ENCODE measurements at regions of chr10 and their contacts with region 1.

Region 1: GRCh38 chr10:21285742-21286331 is 239.6 kb downstream of the SKIDA1 start:
- DNase-seq: no peak
- ATAC-seq: no peak
- H3K4me3 ChIP-seq: no peak overlapping the region
- H3K27ac ChIP-seq: no peak overlapping the region
- H3K4me1 ChIP-seq: no peaks in the 10 kb centered on the region
- H3K27me3 ChIP-seq: no peaks in the 10 kb centered on the region
- CTCF ChIP-seq: no peak
- POLR2A ChIP-seq: no peak

Region 2: DNA sequence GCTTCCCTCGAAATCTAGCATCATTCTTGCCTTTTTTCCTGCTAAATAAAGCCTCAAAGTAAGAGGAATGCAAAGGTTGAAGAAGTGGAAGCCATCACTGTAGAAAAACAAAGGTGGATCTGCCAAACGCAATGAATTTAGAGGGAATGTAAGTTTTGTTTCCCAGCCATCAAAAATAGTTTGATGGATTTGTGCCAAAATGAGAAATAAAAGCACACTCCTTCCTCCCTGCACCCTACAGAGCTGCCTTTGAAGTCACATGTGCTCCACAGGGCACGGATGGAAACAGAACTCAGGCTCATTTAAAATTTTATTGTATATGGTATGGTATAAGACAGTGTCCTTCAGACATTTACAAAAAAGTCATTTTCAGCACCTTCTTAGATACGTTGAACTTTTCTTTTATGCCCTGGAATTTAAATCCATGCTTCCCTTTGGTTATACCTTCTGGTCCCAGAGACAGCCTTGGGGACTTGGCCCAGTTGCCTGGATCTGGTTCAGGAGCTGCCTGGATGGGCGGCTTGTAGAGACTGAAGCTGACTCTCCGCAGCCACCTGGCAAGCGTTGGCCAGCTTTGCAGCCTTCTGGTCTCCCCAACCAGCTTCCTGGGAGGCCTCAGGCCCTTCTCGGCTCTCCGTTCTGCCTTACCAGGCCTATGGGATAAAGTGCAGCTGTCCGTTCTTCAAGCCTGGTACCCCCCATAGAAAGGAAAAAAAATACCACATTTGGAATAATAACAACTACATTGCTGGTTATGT is 160.2 kb before region 1 on chr10:
- intact Hi-C with region 1: no loop called
- DNase-seq: no peak
- ATAC-seq: no peak
- H3K4me3 ChIP-seq: no peak overlapping the region
- H3K27ac ChIP-seq: no peak overlapping the region
- H3K4me1 ChIP-seq: no peaks in the 10 kb centered on the region
- H3K27me3 ChIP-seq: no peaks in the 10 kb centered on the region
- CTCF ChIP-seq: no peak
- POLR2A ChIP-seq: no peak

Region 3: DNA sequence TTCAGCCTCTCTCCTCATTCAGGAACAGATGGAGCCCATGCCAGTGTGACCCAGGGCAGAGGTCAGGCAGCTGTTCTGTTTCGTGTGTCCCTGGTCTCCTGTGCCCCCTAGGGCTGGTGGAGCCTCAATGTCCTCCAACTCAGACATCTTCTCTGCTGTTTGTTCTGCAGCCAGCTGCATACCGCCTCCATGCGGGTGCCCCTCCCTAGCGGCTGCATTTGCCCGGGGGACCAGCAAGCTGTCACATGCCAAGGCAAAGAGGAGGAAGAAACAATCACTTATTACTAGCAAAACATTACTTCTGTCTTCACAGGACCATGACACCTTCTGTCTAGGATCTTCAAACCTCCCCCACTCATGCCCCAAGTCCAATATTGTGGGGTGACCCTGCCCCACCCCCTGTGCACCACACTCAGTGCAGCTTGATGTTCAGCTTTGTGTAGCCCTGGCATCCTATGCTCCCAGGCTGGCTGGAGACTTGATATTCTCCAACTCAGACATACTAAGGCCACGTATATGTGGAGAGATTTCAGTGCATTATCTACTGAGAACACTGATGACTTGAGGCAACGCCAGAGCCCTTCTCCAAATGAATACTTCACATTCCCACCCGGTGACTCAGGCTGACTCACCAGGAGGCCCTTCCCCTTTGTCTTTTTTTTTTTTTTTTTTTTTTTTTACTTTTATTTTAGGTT is 50.8 kb after region 1 on chr10:
- intact Hi-C with region 1: loop called in 1 of 10 experiments (anchors 10 kb)
- DNase-seq: peak; percentile 59 to 82 (median 63)
- ATAC-seq: peak; percentile 75 to 91 (median 82)
- H3K4me3 ChIP-seq: no peak overlapping the region
- H3K27ac ChIP-seq: peak overlapping the region in 9 of 12 donors; percentile 18 to 68 (median 46)
- H3K4me1 ChIP-seq: peaks cover 0 to 25% (median 14%) of the 10 kb centered on the region in 12 donors
- H3K27me3 ChIP-seq: no peaks in the 10 kb centered on the region
- CTCF ChIP-seq: peak in 5 of 12 donors; percentile 9 to 17 (median 16)
- POLR2A ChIP-seq: no peak

Region 4: GRCh38 chr10:21372651-21373410 is 87.0 kb after region 1 on chr10:
- intact Hi-C with region 1: loop called in 2 of 10 experiments (anchors 10 kb)
- DNase-seq: peak in 4 of 5 donors; percentile 33 to 51 (median 44)
- ATAC-seq: peak; percentile 58 to 95 (median 94)
- H3K4me3 ChIP-seq: peak overlapping the region in 4 of 12 donors; percentile 0 to 35 (median 26)
- H3K27ac ChIP-seq: peak overlapping the region in 5 of 12 donors; percentile 13 to 75 (median 41)
- H3K4me1 ChIP-seq: peaks cover 0 to 20% (median 9%) of the 10 kb centered on the region in 12 donors
- H3K27me3 ChIP-seq: no peaks in the 10 kb centered on the region
- CTCF ChIP-seq: no peak
- POLR2A ChIP-seq: no peak

Region 5: GRCh38 chr10:21510241-21511074 is 224.6 kb after region 1 on chr10:
- intact Hi-C with region 1: no loop called
- DNase-seq: peak in 2 of 5 donors; percentile 26 to 54
- ATAC-seq: peak in 3 of 4 donors; percentile 33 to 68 (median 44)
- H3K4me3 ChIP-seq: peak overlapping the region; percentile 20 to 66 (median 54)
- H3K27ac ChIP-seq: peak overlapping the region in 6 of 12 donors; percentile 38 to 59 (median 50)
- H3K4me1 ChIP-seq: peaks cover 0 to 24% (median 0%) of the 10 kb centered on the region in 12 donors
- H3K27me3 ChIP-seq: peaks cover 0 to 36% (median 0%) of the 10 kb centered on the region in 9 donors
- CTCF ChIP-seq: no peak
- POLR2A ChIP-seq: no peak